OCI-LY7 (cell line): ENCODE measurements at regions of chr15 and their contacts with region 1.

Region 1: GRCh38 chr15:65028921-65029735 is at the start of gene MTFMT:
- DNase-seq: peak; percentile 88
- H3K4me3 ChIP-seq: peak within 1 kb of the TSS; percentile 80
- H3K27ac ChIP-seq: no peak within 1 kb of the TSS
- H3K4me1 ChIP-seq: peaks cover 23% of the 10 kb centered on the region
- CTCF ChIP-seq: no peak; the same call in 1 of the 2 replicates
- total RNA-seq, gene MTFMT: 9.1 and 9.7 TPM in 2 replicates

Region 2: DNA sequence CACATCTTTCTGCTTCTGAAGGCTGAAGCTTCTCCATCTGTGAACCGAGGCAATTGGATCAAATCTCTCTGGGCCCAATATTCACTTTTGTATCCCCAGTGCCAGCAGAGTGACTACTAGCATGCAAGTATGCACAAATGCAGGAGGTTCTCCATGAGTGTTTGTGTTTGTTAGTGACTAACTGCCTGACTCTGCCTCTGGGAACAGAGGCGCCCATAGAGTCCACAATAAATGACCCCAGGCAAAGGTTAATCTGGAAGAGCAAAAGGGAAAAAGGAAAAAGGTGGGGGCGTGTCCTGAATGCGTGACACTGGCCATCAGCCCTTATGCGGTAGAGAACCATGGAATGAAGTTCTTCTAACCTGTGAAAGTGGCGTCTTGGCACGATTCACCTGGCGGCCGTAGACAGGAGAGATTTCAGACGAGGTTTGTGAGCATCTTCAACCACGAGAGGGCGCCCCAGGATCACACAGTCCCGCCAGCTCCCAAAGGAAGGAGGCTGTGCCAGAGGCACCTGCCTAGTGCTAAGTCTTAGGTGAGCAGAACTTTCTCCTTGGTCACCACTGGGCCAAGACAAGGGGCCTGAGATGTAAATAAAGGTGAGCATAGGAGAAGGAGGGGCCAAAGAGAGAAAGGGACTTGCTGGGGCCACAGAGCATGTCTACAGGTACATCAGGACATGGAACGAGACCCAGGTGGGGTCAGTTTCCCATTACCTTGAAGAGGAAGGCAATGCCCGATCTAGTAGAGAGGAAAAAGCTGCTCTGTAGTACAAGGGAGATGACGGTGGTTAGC is 297.9 kb before region 1 on chr15:
- CTCF ChIA-PET with region 1: no interaction called
- POLR2A ChIA-PET with region 1: no interaction called
- intact Hi-C with region 1: loop called (anchors 5 kb)
- DNase-seq: peak; percentile 86
- H3K4me3 ChIP-seq: no peak overlapping the region
- H3K27ac ChIP-seq: no peak overlapping the region
- H3K4me1 ChIP-seq: no peaks in the 10 kb centered on the region
- CTCF ChIP-seq: peak; percentile 96

Region 3: GRCh38 chr15:65054333-65055200 is 25.4 kb after region 1 on chr15:
- CTCF ChIA-PET with region 1: no interaction called
- POLR2A ChIA-PET with region 1: interaction called, 4 read pairs
- intact Hi-C with region 1: loop called (anchors 1 kb)
- DNase-seq: peak; percentile 70
- H3K4me3 ChIP-seq: no peak overlapping the region
- H3K27ac ChIP-seq: no peak overlapping the region
- H3K4me1 ChIP-seq: peaks cover 17% of the 10 kb centered on the region
- CTCF ChIP-seq: peak; percentile 85

Region 4: DNA sequence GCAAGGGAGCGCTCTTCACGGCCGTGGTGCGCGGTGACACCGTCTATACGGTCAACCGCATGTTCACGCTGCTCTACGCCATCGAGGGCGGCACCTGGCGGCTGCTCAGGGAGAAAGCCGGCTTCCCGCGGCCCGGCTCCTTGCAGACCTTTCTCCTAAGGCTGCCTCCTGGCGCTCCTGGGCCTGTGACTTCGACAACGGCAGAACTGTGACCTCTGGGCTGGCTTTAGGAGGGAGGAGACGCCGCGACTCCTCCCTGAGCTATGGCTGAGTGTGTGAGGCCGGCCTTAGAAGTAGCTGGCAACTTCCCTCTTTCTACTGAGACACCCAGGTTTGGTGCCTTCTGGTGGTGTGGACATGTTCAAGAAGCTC is 48.8 kb after region 1 on chr15:
- CTCF ChIA-PET with region 1: no interaction called
- POLR2A ChIA-PET with region 1: no interaction called
- intact Hi-C with region 1: no loop called
- DNase-seq: no peak
- H3K4me3 ChIP-seq: no peak overlapping the region
- H3K27ac ChIP-seq: no peak overlapping the region
- H3K4me1 ChIP-seq: no peaks in the 10 kb centered on the region
- CTCF ChIP-seq: no peak

Region 5: DNA sequence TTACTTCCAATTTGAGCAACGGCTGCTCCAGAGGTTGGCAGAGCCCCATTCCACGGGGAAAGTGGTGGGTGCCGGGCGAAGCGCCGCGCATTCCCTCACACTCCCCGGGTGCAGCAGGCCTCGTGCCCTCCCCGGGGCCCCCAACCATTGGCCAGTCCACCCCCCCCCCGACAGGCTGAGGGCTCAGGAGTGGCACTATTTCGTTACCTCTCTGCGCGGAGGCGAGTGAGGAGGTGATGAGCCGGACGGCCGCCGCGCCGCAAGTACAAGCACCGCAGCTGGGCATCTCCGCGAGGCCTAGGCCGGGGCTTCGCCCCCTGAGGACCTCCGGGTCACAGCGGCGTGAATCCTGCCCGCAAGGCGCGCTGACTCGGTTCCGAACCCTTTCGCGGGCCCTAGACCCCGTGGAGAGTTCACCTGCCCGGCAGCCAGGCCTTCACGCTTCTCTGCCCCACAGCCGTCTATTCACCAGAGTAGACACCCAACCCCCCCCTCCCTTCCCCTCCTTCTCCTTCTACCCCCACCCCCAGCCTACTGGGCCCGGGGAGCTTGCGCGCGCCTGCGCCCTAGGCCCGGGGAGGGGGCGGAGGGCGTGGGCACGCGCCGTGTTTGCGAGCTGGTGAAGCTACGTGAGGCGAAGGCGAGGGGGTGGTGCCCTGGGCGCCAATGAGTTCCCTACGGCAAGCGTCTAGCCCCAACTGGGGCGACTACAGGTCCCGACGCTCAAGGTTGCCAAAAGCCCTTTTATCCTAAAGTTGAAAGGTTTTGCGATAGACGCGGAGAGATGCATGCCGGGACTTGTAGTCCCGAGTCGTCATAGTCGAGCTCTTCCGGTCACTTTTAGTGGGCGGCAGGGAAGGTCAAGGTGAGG is 156.0 kb after region 1 on chr15 and contains the start of gene CLPX:
- CTCF ChIA-PET with region 1: interaction called, 3 read pairs
- POLR2A ChIA-PET with region 1: no interaction called
- intact Hi-C with region 1: loop called (anchors 10 kb)
- DNase-seq: peak; percentile 92
- H3K4me3 ChIP-seq: peak within 1 kb of the TSS; percentile 94
- H3K27ac ChIP-seq: peak within 1 kb of the TSS; percentile 65
- H3K4me1 ChIP-seq: peaks cover 27% of the 10 kb centered on the region
- CTCF ChIP-seq: no peak
- total RNA-seq, gene CLPX: 26.0 and 34.0 TPM in 2 replicates

Region 6: GRCh38 chr15:65304389-65305144 is 275.4 kb after region 1 on chr15 and contains the start of gene RNU5B-1:
- CTCF ChIA-PET with region 1: interaction called, 3 read pairs
- POLR2A ChIA-PET with region 1: interaction called, 5 read pairs
- intact Hi-C with region 1: loop called (anchors 2 kb)
- DNase-seq: peak; percentile 96
- H3K4me3 ChIP-seq: peak within 1 kb of the TSS; percentile 69
- H3K27ac ChIP-seq: peak within 1 kb of the TSS; percentile 91
- H3K4me1 ChIP-seq: peaks cover 24% of the 10 kb centered on the region
- CTCF ChIP-seq: peak; percentile 99
- total RNA-seq, gene RNU5B-1: not detected in 2 replicates